ENCODE measurements at regions of chr1 and their contacts with region 1.

Region 1: GRCh38 chr1:164786980-164787833 is 228.2 kb downstream of the PBX1 start:
- DNase-seq: no peak
- ATAC-seq: peak; percentile 99
- H3K4me3 ChIP-seq: no peak overlapping the region
- H3K27ac ChIP-seq: no peak overlapping the region
- H3K4me1 ChIP-seq: no peaks in the 10 kb centered on the region
- H3K27me3 ChIP-seq: no peaks in the 10 kb centered on the region
- CTCF ChIP-seq: peak; percentile 86 to 94 (median 93)
- EP300 ChIP-seq: no peak
- POLR2A ChIP-seq: no peak
- RAD21 ChIP-seq: peak; percentile 89

Region 2: GRCh38 chr1:163410073-163410999 is 1376.9 kb before region 1 on chr1:
- CTCF ChIA-PET with region 1: interaction called, 5 read pairs
- POLR2A ChIA-PET with region 1: no interaction called
- RAD21 ChIA-PET with region 1: interaction called, 3 read pairs
- SMC1A ChIA-PET with region 1: interaction called, 3 read pairs
- in situ Hi-C with region 1: loop called (anchors 5 kb)
- intact Hi-C with region 1: loop called (anchors 2 kb)
- DNase-seq: no peak
- ATAC-seq: peak; percentile 55
- H3K4me3 ChIP-seq: no peak overlapping the region
- H3K27ac ChIP-seq: no peak overlapping the region
- H3K4me1 ChIP-seq: peaks cover 9% of the 10 kb centered on the region
- H3K27me3 ChIP-seq: no peaks in the 10 kb centered on the region
- CTCF ChIP-seq: peak; percentile 73 to 84 (median 82)
- EP300 ChIP-seq: no peak
- POLR2A ChIP-seq: no peak
- RAD21 ChIP-seq: peak; percentile 91

Region 3: GRCh38 chr1:163820766-163821165 is 966.4 kb before region 1 on chr1:
- CTCF ChIA-PET with region 1: no interaction called
- POLR2A ChIA-PET with region 1: no interaction called
- RAD21 ChIA-PET with region 1: no interaction called
- SMC1A ChIA-PET with region 1: no interaction called
- in situ Hi-C with region 1: no loop called
- intact Hi-C with region 1: loop called (anchors 10 kb)
- DNase-seq: no peak
- ATAC-seq: peak; percentile 15; the same call in 1 of the 3 replicates
- H3K4me3 ChIP-seq: no peak overlapping the region
- H3K27ac ChIP-seq: no peak overlapping the region
- H3K4me1 ChIP-seq: no peaks in the 10 kb centered on the region
- H3K27me3 ChIP-seq: no peaks in the 10 kb centered on the region
- CTCF ChIP-seq: no peak
- EP300 ChIP-seq: no peak
- POLR2A ChIP-seq: no peak
- RAD21 ChIP-seq: peak; percentile 14; the same call in 1 of the 2 replicates

Region 4: DNA sequence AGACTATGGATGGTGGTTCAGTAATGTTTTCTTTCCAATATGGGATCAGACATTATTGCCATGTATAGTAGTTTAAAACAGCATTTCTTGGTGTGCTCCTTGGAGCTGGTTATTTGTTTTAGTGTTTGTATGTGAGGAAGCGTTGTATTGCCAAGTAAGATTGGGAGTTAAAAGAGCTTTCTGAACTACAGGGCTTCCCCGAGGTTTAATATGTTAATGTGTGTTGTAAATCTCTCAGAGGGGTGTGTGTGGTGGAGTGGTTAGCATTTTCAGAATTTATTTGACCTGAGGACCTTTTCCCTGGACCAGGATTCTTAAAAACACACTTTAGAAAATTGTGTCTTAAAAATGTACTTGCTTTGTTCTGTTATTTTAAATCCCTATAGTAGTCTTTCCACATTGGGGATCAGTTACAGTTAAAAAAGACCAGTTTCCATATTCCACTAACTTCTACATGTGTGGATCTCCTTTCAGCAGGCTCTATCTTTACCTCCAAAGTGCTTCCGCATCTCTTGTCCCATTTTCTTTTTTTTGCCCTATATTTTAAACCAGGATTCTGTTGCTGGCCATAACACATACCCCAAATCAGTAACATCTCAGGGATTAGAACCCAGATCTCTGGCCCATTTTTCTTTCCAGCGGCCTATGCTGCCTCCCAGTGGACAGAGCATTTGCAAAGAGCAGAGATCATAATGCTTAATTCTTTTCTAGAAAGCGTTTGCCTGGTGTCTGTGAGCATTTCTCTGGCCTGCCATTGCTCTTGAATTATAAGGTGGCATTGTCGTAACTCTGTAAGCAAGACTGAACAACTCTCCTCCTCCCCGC is 169.6 kb before region 1 on chr1:
- CTCF ChIA-PET with region 1: interaction called, 5 read pairs
- POLR2A ChIA-PET with region 1: no interaction called
- RAD21 ChIA-PET with region 1: no interaction called
- SMC1A ChIA-PET with region 1: no interaction called
- in situ Hi-C with region 1: no loop called
- intact Hi-C with region 1: loop called (anchors 2 kb)
- DNase-seq: no peak
- ATAC-seq: peak; percentile 54
- H3K4me3 ChIP-seq: no peak overlapping the region
- H3K27ac ChIP-seq: no peak overlapping the region
- H3K4me1 ChIP-seq: no peaks in the 10 kb centered on the region
- H3K27me3 ChIP-seq: no peaks in the 10 kb centered on the region
- CTCF ChIP-seq: peak in 2 of 3 experiments; percentile 34 to 35; a peak in 3 of 6 replicates
- EP300 ChIP-seq: no peak
- POLR2A ChIP-seq: no peak
- RAD21 ChIP-seq: peak; percentile 63

Region 5: DNA sequence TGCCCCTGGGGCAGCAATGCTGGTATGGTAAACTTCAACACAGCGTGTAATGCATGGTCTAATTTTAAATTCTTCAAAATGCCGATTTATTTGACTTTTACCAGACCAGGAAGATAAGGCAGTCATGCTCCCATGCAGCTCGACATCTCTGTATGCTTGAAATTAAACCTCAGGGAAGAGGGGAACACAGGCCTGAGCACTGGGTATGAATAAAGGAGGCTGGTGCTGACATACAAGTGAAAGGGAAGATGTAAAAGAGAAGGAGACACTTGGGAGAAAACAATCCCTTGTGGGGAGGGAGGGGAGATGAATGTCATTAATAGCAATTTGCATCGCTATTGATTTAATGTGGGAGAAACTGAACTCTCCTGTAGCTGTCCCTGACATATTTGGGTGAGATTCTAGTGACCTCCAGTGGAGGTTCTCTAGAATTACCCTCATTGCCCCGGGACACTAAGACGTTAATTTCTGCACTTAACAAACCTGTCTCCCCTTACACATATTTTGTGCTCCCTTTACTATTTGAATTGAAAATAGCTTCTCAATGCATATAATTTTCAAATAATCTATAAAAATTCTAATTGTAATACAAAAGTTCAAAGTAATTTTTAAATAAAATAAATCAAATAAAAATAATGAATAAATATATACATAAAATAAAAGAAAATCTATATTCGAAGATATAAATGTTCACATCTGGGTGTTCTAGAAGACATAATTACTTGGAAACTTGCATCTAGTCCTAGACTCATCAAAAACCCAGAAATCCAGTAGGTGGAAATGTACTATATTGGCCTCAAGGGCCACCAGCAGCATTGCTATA is 286.2 kb after region 1 on chr1:
- CTCF ChIA-PET with region 1: interaction called, 4 read pairs
- POLR2A ChIA-PET with region 1: no interaction called
- RAD21 ChIA-PET with region 1: interaction called, 3 read pairs
- SMC1A ChIA-PET with region 1: no interaction called
- in situ Hi-C with region 1: no loop called
- intact Hi-C with region 1: loop called (anchors 10 kb)
- DNase-seq: no peak
- ATAC-seq: peak; percentile 84
- H3K4me3 ChIP-seq: no peak overlapping the region
- H3K27ac ChIP-seq: no peak overlapping the region
- H3K4me1 ChIP-seq: no peaks in the 10 kb centered on the region
- H3K27me3 ChIP-seq: no peaks in the 10 kb centered on the region
- CTCF ChIP-seq: peak; percentile 53 to 68 (median 54); a peak in 5 of 6 replicates
- EP300 ChIP-seq: no peak
- POLR2A ChIP-seq: no peak
- RAD21 ChIP-seq: peak; percentile 69

Measured in GM12878 (cell line).